ENCODE measurements at regions of chr3 and their contacts with region 1.

Region 1: GRCh38 chr3:12841149-12841970 is at the start of gene RPL32:
- DNase-seq: peak; percentile 90 to 92 (median 91)
- H3K4me3 ChIP-seq: peak within 1 kb of the TSS; percentile 85 to 89
- H3K4me3 Mint-ChIP-seq: peak within 1 kb of the TSS; percentile 95 to 99 (median 98)
- H3K27ac ChIP-seq: peak within 1 kb of the TSS; percentile 92
- H3K27ac Mint-ChIP-seq: peak within 1 kb of the TSS; percentile 99 to 100 (median 100)
- H3K4me1 ChIP-seq: peaks cover 40% of the 10 kb centered on the region
- H3K4me1 Mint-ChIP-seq: peaks cover 28 to 56% (median 40%) of the 10 kb centered on the region in 4 donors
- H3K27me3 ChIP-seq: no peaks in the 10 kb centered on the region
- H3K27me3 Mint-ChIP-seq: no peaks in the 10 kb centered on the region
- total RNA-seq, gene RPL32: 3,446 to 3,480 TPM

Region 2: GRCh38 chr3:12556671-12557472 is 284.5 kb before region 1 on chr3 and contains the start of gene MKRN2:
- CTCF ChIA-PET with region 1: no interaction called
- POLR2A ChIA-PET with region 1: no interaction called
- intact Hi-C with region 1: loop called (anchors 1 kb)
- DNase-seq: peak; percentile 81 to 87 (median 82)
- H3K4me3 ChIP-seq: peak within 1 kb of the TSS; percentile 75 to 92
- H3K4me3 Mint-ChIP-seq: peak within 1 kb of the TSS; percentile 89 to 99 (median 94)
- H3K27ac ChIP-seq: peak within 1 kb of the TSS; percentile 93
- H3K27ac Mint-ChIP-seq: peak within 1 kb of the TSS; percentile 88 to 98 (median 95)
- H3K4me1 ChIP-seq: peaks cover 52% of the 10 kb centered on the region
- H3K4me1 Mint-ChIP-seq: peaks cover 43 to 68% (median 55%) of the 10 kb centered on the region in 4 donors
- H3K27me3 ChIP-seq: peaks cover 14% of the 10 kb centered on the region
- H3K27me3 Mint-ChIP-seq: peaks cover 21 to 23% of the 10 kb centered on the region in 2 donors
- total RNA-seq, gene MKRN2: 31.7 to 32.0 TPM

Region 3: GRCh38 chr3:12706504-12707253 is 134.7 kb before region 1 on chr3:
- CTCF ChIA-PET with region 1: no interaction called
- POLR2A ChIA-PET with region 1: no interaction called
- intact Hi-C with region 1: loop called (anchors 1 kb)
- DNase-seq: peak; percentile 46 to 61 (median 52)
- H3K4me3 ChIP-seq: no peak overlapping the region
- H3K4me3 Mint-ChIP-seq: no peak overlapping the region
- H3K27ac ChIP-seq: no peak overlapping the region
- H3K27ac Mint-ChIP-seq: no peak overlapping the region
- H3K4me1 ChIP-seq: no peaks in the 10 kb centered on the region
- H3K4me1 Mint-ChIP-seq: no peaks in the 10 kb centered on the region
- H3K27me3 ChIP-seq: no peaks in the 10 kb centered on the region
- H3K27me3 Mint-ChIP-seq: peaks cover 1 to 9% of the 10 kb centered on the region in 2 donors

Region 4: GRCh38 chr3:12796171-12797123 is 44.9 kb before region 1 on chr3 and contains the start of gene CAND2:
- CTCF ChIA-PET with region 1: interaction called, 15 read pairs
- POLR2A ChIA-PET with region 1: interaction called, 25 read pairs
- intact Hi-C with region 1: no loop called
- DNase-seq: peak; percentile 25 to 52 (median 37)
- H3K4me3 ChIP-seq: peak within 1 kb of the TSS; percentile 43 to 52
- H3K4me3 Mint-ChIP-seq: peak within 1 kb of the TSS; percentile 86 to 90 (median 87)
- H3K27ac ChIP-seq: peak within 1 kb of the TSS; percentile 38
- H3K27ac Mint-ChIP-seq: peak within 1 kb of the TSS in 6 of 7 donors; percentile 60 to 84 (median 76)
- H3K4me1 ChIP-seq: peaks cover 9% of the 10 kb centered on the region
- H3K4me1 Mint-ChIP-seq: peaks cover 2 to 22% (median 11%) of the 10 kb centered on the region in 4 donors
- H3K27me3 ChIP-seq: no peaks in the 10 kb centered on the region
- H3K27me3 Mint-ChIP-seq: peaks cover 0 to 6% of the 10 kb centered on the region in 2 donors
- total RNA-seq, gene CAND2: 1.9 to 2.2 TPM

Region 5: DNA sequence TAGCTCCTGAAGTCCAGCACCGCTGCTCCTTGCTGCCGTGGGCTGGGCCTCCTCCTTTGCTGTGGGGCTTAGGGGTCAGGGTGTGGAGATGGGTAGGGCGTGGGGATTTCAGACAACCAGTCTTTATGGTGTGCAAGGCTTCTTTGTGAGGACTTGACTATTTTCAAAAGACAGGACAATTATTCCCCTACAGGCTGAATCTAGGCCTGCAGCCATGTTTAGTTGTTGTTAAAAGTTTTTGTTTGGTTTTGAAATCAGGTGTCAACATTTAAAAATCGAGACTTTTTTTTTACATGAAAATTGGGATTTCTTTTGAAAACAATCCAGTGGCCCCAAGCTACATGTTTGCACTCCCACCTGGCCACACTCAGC is 10.6 kb before region 1 on chr3:
- CTCF ChIA-PET with region 1: interaction called, 38 read pairs
- POLR2A ChIA-PET with region 1: interaction called, 37 read pairs
- intact Hi-C with region 1: no loop called
- DNase-seq: no peak
- H3K4me3 ChIP-seq: no peak overlapping the region
- H3K4me3 Mint-ChIP-seq: no peak overlapping the region
- H3K27ac ChIP-seq: no peak overlapping the region
- H3K27ac Mint-ChIP-seq: peak overlapping the region in 2 of 7 donors; percentile 11 to 68
- H3K4me1 ChIP-seq: no peaks in the 10 kb centered on the region
- H3K4me1 Mint-ChIP-seq: peaks cover 0 to 3% (median 0%) of the 10 kb centered on the region in 4 donors
- H3K27me3 ChIP-seq: no peaks in the 10 kb centered on the region
- H3K27me3 Mint-ChIP-seq: no peaks in the 10 kb centered on the region

Region 6: GRCh38 chr3:12967606-12968351 is 126.4 kb after region 1 on chr3:
- CTCF ChIA-PET with region 1: interaction called, 3 read pairs
- POLR2A ChIA-PET with region 1: interaction called, 3 read pairs
- intact Hi-C with region 1: loop called (anchors 10 kb)
- DNase-seq: peak; percentile 82 to 89 (median 83)
- H3K4me3 ChIP-seq: peak overlapping the region in 1 of 2 donors; percentile 50
- H3K4me3 Mint-ChIP-seq: peak overlapping the region; percentile 67 to 86 (median 82)
- H3K27ac ChIP-seq: peak overlapping the region; percentile 8
- H3K27ac Mint-ChIP-seq: peak overlapping the region; percentile 27 to 89 (median 78)
- H3K4me1 ChIP-seq: peaks cover 68% of the 10 kb centered on the region
- H3K4me1 Mint-ChIP-seq: peaks cover 47 to 87% (median 65%) of the 10 kb centered on the region in 4 donors
- H3K27me3 ChIP-seq: no peaks in the 10 kb centered on the region
- H3K27me3 Mint-ChIP-seq: no peaks in the 10 kb centered on the region

Measured in CD4-positive, alpha-beta memory T cell (primary cell).